H1 (cell line): ENCODE measurements at regions of chr1 and their contacts with region 1.

Region 1: DNA sequence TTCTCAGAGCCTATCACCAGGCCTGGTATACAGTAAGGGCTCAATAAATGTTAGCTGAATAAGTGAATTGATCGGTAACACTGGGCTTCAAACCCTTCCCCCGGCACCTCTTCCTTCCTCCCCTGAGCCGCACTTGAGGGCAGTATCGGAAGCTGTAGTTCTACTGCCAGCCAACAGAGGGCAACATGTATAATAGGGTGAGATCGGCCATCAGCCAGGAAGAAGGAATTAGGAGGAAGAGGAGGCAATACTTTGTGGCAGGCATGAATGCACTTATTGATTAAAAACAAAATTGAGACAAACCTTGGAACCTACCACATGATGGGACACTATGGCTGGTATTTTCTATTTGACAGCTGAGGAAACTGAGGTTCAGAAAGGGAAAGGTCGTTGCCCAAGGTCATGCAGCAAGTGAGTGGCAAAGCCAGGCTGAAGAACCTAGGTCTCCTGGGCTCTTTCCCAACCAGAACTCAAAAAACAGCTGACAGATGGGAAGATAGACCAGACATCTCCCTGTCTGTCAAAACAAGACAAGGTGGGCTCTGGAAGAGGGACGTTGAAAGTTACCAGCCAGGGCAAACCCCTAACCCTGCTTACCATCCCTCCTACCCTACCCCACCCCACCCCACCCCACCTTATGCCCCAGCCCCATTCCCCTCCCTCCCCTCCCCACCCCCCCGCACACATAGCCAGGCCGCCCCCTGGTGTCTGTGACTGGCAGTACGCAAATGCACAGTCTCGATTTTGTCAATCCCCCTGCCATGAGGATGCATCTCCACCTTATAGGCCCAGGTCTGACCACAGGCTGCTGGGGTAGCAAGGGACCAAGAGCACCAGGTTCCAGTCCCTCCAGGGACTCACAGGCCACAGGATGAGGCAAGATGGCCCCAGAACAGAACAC is 107.3 kb upstream of the RUNX3 start:
- DNase-seq: peak in 1 of 2 experiments; percentile 82
- H3K4me3 ChIP-seq: no peak overlapping the region
- H3K27ac ChIP-seq: no peak overlapping the region
- H3K4me1 ChIP-seq: peaks cover 0 to 3% (median under 1%) of the 10 kb centered on the region in 4 experiments; a peak in 2 of 7 replicates
- H3K27me3 ChIP-seq: no peaks in the 10 kb centered on the region
- CTCF ChIP-seq: peak; percentile 82 to 85 (median 83)
- EP300 ChIP-seq: no peak
- POLR2A ChIP-seq: no peak
- RAD21 ChIP-seq: peak; percentile 46 to 66

Region 2: DNA sequence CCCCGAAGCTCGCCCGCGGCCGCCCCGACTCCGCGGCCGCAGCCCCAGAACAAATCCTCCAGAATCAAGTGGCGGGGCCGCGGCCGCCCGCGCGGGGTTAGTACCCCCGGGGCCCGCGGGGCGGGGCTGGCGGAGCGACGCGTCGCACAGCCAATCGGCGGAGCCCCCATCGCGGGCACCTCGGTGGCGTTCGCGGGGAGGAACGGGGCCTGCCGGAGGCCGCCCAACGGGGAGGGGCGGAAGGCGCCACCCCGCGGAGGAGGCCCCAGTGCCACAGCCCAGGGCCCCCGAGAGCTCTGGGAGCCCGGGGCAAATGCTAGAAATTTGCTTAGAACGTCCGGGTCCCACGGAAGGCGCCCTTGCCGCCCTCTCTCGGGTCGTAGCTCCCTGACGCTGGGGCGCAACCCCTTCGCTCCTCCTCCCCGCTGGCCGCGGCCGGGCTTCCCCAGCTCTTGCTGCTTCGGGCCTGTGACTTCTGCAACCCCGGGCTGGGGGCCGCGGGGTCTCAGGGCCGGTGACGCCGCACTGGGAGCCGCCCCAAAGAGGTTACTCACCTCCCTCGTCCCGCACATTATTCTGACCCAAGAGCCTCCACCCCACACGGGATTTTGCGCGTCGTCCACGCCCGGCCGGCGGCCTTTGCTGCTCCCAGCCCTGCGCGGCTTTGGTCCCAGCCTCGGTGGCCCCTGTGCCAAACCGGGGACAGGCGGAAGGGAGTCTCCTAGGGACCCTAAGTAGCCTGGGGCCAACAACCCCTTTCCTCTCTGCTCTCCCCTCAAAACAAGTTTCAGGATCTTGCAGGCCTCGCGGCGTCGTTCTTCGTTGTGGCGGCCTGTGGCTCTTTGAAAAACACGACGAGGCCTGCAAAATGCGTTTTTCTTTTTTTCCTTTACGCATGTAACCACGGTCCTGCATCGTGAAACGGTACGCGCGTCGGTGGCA is 106.9 kb before region 1 on chr1 and contains the start of gene RUNX3:
- CTCF ChIA-PET with region 1: interaction called, 36 read pairs
- POLR2A ChIA-PET with region 1: interaction called, 3 read pairs
- DNase-seq: peak in 1 of 2 experiments; percentile 83
- H3K4me3 ChIP-seq: peak within 1 kb of the TSS; percentile 27 to 61 (median 40)
- H3K27ac ChIP-seq: no peak within 1 kb of the TSS
- H3K4me1 ChIP-seq: peaks cover 6 to 67% (median 46%) of the 10 kb centered on the region in 4 experiments
- H3K27me3 ChIP-seq: peaks cover 68 to 97% (median 91%) of the 10 kb centered on the region in 4 experiments
- CTCF ChIP-seq: no peak
- EP300 ChIP-seq: no peak
- POLR2A ChIP-seq: no peak
- RAD21 ChIP-seq: no peak
- total RNA-seq, gene RUNX3: 0.48 and 0.82 TPM in 2 replicates

Region 3: GRCh38 chr1:24952413-24952841 is 85.0 kb before region 1 on chr1:
- CTCF ChIA-PET with region 1: interaction called, 18 read pairs
- POLR2A ChIA-PET with region 1: no interaction called
- DNase-seq: no peak
- H3K4me3 ChIP-seq: no peak overlapping the region
- H3K27ac ChIP-seq: no peak overlapping the region
- H3K4me1 ChIP-seq: peaks cover 3 to 21% (median 12%) of the 10 kb centered on the region in 4 experiments; a peak in 6 of 7 replicates
- H3K27me3 ChIP-seq: no peaks in the 10 kb centered on the region
- CTCF ChIP-seq: 0 out of 4 replicates have a peak, but pooled peaks of 1 of the 3 experiments have one; percentile 11
- EP300 ChIP-seq: no peak
- POLR2A ChIP-seq: no peak
- RAD21 ChIP-seq: no peak; a peak in 1 of 4 replicates

Region 4: GRCh38 chr1:24990779-24991641 is 46.4 kb before region 1 on chr1:
- CTCF ChIA-PET with region 1: interaction called, 31 read pairs
- POLR2A ChIA-PET with region 1: no interaction called
- DNase-seq: no peak
- H3K4me3 ChIP-seq: no peak overlapping the region
- H3K27ac ChIP-seq: no peak overlapping the region
- H3K4me1 ChIP-seq: 0 out of 7 replicates have a peak, but pooled peaks cover 0 to 2% (median 0%) of the 10 kb centered on the region in 4 experiments
- H3K27me3 ChIP-seq: no peaks in the 10 kb centered on the region
- CTCF ChIP-seq: peak; percentile 29 to 47 (median 39)
- EP300 ChIP-seq: no peak
- POLR2A ChIP-seq: no peak
- RAD21 ChIP-seq: peak; percentile 48 to 63

Region 5: GRCh38 chr1:25011943-25012638 is 25.3 kb before region 1 on chr1:
- CTCF ChIA-PET with region 1: interaction called, 59 read pairs
- POLR2A ChIA-PET with region 1: no interaction called
- DNase-seq: no peak
- H3K4me3 ChIP-seq: no peak overlapping the region
- H3K27ac ChIP-seq: no peak overlapping the region
- H3K4me1 ChIP-seq: peaks cover 0 to 6% (median 2%) of the 10 kb centered on the region in 4 experiments; a peak in 3 of 7 replicates
- H3K27me3 ChIP-seq: 0 out of 7 replicates have a peak, but pooled peaks cover 0 to under 1% (median 0%) of the 10 kb centered on the region in 4 experiments
- CTCF ChIP-seq: no peak
- EP300 ChIP-seq: no peak
- POLR2A ChIP-seq: no peak
- RAD21 ChIP-seq: no peak

Region 6: DNA sequence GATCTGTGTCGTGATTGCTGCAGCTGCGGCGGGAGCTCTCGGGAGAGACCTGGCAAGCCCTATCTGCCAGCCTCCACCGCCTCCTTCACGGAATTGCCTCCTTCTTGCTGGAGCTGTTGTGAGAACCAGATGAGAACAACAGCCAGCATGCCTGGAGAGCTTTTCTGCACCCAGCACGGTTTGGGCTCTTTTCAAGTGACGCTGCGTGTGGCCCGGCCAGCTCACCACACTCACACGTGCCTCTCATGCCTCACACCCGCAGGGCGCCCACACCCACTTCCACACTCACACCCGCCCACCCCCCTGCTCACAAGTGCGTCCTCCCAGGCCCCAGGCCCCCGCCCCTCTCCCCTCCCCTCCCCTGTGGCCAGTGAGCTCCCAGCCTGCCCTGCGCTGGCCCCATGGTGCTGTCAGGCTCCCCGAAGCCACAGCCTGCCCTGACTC is 28.4 kb after region 1 on chr1:
- CTCF ChIA-PET with region 1: interaction called, 27 read pairs
- POLR2A ChIA-PET with region 1: no interaction called
- DNase-seq: no peak
- H3K4me3 ChIP-seq: no peak overlapping the region
- H3K27ac ChIP-seq: no peak overlapping the region
- H3K4me1 ChIP-seq: peaks cover 0 to 6% (median under 1%) of the 10 kb centered on the region in 4 experiments; a peak in 1 of 7 replicates
- H3K27me3 ChIP-seq: no peaks in the 10 kb centered on the region
- CTCF ChIP-seq: no peak
- EP300 ChIP-seq: no peak
- POLR2A ChIP-seq: no peak
- RAD21 ChIP-seq: no peak

Region 7: GRCh38 chr1:25167331-25168199 is 130.1 kb after region 1 on chr1:
- CTCF ChIA-PET with region 1: no interaction called
- POLR2A ChIA-PET with region 1: no interaction called
- DNase-seq: peak in 1 of 2 experiments; percentile 43
- H3K4me3 ChIP-seq: no peak overlapping the region
- H3K27ac ChIP-seq: no peak overlapping the region
- H3K4me1 ChIP-seq: peaks cover 0 to 4% (median 0%) of the 10 kb centered on the region in 4 experiments; a peak in 2 of 7 replicates
- H3K27me3 ChIP-seq: no peaks in the 10 kb centered on the region; a peak in 1 of 7 replicates
- CTCF ChIP-seq: no peak
- EP300 ChIP-seq: no peak
- POLR2A ChIP-seq: no peak
- RAD21 ChIP-seq: no peak